ENCODE measurements at regions of chr10 and their contacts with region 1.

Region 1: DNA sequence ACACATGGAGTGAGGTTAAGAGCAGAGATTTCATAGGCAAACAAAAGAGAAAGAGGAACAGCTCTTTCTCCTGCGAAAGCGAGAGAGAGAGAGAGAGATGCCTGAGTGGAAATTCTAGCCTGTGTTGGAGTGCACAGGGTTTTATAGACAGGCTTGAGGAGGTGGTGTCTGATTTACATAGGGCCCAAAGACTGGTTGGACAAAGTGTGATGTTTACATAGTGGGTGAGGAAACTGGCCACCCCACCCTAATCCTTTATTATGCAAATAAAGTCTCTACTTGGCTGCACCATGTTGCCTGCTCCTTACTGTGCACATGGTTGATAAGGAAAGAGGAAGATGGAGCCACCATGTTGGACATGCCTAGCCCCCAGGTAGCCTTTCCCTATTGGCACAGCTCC is 967.8 kb upstream of the SORCS1 start:
- DNase-seq: no peak
- ATAC-seq: no peak
- H3K4me3 ChIP-seq: no peak overlapping the region
- H3K27ac ChIP-seq: no peak overlapping the region
- H3K4me1 ChIP-seq: no peaks in the 10 kb centered on the region
- H3K27me3 ChIP-seq: no peaks in the 10 kb centered on the region

Region 2: DNA sequence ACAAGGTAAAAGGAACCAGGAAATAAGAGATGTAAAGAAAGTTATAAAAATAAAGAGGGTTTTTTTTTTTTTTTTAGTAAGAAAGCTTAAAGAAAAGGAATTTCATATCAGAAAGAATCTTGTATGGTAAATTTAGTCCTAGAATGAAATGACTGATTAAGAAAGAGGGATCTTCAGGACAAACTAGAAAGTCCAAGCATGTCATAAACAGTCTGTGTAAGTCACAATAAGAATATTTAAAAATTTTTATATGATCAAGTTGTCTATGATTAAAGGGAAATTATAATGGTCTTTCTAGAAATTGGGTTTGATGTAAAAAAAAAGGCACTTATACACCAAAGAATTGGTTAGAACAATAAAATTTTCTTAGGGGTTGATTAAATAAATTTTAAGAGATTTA is 1501.5 kb after region 1 on chr10:
- intact Hi-C with region 1: loop called in 1 of 2 experiments (anchors 10 kb)
- DNase-seq: no peak
- ATAC-seq: no peak
- H3K4me3 ChIP-seq: no peak overlapping the region
- H3K27ac ChIP-seq: no peak overlapping the region
- H3K4me1 ChIP-seq: no peaks in the 10 kb centered on the region
- H3K27me3 ChIP-seq: no peaks in the 10 kb centered on the region